MCF 10A (cell line): ENCODE measurements at regions of chr7 and their contacts with region 1.

Region 1: DNA sequence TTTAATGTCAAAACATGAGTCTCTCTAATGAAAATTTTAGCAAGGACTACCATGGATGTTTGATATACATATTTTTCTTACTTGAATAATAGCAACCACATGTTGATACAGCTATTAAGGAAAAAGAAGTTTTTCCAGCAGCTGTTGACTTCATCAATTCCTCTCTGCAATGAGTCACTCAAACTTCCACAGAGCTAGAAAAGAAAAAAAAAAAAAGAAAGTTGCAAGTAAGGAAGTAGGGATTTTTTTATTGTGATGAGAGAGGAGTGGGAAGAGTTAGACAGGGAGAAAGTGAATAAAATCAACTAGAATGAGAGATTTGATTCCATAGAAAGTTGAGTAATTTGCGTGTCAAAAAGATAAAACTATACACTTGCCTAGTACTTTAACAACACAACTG is 46.2 kb downstream of the CAV1 start:
- DNase-seq: peak; percentile 58
- H3K4me3 Mint-ChIP-seq: peak overlapping the region; percentile 26
- H3K27ac Mint-ChIP-seq: peak overlapping the region; percentile 47
- H3K4me1 Mint-ChIP-seq: peaks cover 42% of the 10 kb centered on the region
- H3K27me3 Mint-ChIP-seq: no peaks in the 10 kb centered on the region
- CTCF ChIP-seq: no peak

Region 2: DNA sequence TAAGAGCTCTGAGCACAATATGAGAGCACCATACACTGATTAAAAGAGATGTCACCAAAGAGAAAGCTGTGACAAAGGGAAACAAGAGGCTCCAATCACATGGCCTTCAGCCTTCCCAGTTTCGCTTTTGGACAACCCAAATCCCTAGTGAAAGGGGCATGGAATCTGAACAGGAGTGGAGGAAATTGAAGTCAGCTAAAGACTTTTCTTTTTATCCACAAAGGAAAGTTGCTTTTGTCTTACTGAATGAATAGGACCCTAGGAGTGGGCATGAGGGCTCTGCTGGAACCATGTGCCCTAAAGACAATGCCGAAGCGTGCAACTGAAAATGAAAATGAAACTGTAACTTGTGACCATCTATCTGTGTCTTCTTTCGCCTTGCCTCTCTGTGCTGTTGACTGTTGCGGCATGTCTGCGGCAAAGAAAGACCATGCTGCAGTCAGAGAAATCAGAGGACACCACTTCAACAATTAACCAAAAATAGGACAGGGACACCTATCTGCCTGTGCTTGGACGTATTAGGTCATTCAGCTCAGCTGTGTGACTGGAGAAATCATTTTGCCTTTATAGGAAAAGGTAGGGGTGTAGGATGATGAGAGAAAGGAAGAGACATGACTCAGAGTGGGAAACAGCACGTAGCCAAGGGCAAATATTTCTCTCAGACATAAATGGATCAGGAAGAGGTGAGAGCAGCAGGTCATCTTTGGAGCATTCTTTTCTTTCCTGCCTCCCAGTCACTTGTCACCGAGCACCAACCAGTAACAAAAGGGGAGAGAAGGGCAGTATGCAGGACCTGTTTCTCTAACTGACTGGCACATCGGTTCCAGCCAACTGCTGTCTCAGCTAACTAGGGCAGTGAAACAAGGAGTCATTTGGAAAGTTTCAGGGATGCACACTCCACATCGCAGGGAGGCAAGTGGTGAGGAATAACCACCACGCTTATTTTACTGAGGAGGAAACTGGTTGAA is 59.2 kb before region 1 on chr7:
- CTCF ChIA-PET with region 1: no interaction called
- POLR2A ChIA-PET with region 1: interaction called, 18 read pairs
- intact Hi-C with region 1: no loop called
- DNase-seq: peak; percentile 82
- H3K4me3 Mint-ChIP-seq: peak overlapping the region; percentile 76
- H3K27ac Mint-ChIP-seq: peak overlapping the region; percentile 82
- H3K4me1 Mint-ChIP-seq: peaks cover 35% of the 10 kb centered on the region
- H3K27me3 Mint-ChIP-seq: no peaks in the 10 kb centered on the region
- CTCF ChIP-seq: no peak

Region 3: DNA sequence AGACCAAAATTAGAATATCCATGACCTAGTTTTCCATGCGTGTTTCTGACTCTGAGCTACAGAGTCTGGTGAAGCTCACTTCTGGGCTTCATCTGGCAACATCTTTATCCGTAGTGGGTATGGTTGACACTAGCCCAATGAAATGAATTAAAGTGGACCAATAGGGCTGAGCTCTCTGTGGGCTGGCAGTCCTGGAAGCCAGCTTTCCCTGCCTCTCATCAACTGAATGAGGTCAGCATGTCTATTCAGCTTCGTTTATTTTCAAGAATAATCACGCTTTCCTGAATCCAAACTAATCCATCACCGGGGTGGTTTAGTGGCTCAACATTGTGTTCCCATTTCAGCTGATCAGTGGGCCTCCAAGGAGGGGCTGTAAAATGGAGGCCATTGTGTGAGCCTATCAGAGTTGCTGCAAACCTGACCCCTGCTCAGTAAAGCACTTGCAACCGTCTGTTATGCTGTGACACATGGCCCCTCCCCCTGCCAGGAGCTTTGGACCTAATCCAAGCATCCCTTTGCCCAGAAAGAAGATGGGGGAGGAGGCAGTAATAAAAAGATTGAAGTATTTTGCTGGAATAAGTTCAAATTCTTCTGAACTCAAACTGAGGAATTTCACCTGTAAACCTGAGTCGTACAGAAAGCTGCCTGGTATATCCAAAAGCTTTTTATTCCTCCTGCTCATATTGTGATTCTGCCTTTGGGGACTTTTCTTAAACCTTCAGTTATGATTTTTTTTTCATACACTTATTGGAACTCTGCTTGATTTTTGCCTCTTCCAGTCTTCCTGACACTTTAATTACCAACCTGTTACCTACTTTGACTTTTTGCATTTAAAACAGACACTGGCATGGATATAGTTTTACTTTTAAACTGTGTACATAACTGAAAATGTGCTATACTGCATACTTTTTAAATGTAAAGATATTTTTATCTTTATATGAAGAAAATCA is 10.7 kb before region 1 on chr7:
- CTCF ChIA-PET with region 1: interaction called, 3 read pairs
- POLR2A ChIA-PET with region 1: interaction called, 19 read pairs
- intact Hi-C with region 1: no loop called
- DNase-seq: peak; percentile 22
- H3K4me3 Mint-ChIP-seq: no peak overlapping the region
- H3K27ac Mint-ChIP-seq: no peak overlapping the region
- H3K4me1 Mint-ChIP-seq: peaks cover 19% of the 10 kb centered on the region
- H3K27me3 Mint-ChIP-seq: no peaks in the 10 kb centered on the region
- CTCF ChIP-seq: no peak

Region 4: DNA sequence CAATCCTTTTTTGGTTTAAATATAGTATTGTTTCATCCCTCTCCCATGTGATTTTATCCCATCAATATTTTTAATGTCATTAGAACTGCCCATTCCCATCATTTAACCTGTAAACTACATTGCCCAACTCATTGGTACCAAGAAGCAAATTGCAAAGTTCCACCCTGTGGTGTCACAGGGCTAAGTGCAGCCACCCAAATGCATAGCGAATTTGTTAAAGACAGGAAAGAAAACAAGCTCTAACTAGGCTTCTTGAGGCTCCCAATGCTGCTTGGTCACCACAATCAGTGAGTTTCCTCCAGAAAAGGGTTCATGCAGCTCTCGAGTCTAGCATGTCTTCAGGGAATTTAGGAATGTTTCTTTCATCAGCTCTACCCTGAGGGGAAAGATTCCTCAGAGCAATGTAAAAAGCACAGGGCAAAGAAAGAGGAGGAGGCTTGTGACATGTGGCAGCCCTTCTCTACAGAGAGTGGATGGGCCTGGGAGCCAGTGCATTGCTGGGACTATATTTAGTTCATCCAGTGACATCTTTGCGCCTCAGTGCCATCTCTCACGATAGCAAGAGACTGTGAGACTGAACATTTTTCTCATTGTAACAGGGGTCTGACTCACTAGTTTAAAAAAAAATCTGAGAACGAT is 11.9 kb after region 1 on chr7:
- CTCF ChIA-PET with region 1: interaction called, 33 read pairs
- POLR2A ChIA-PET with region 1: interaction called, 12 read pairs
- intact Hi-C with region 1: no loop called
- DNase-seq: peak; percentile 38
- H3K4me3 Mint-ChIP-seq: no peak overlapping the region
- H3K27ac Mint-ChIP-seq: peak overlapping the region; percentile 62
- H3K4me1 Mint-ChIP-seq: peaks cover 17% of the 10 kb centered on the region
- H3K27me3 Mint-ChIP-seq: no peaks in the 10 kb centered on the region
- CTCF ChIP-seq: no peak